ENCODE measurements at regions of chr2 and their contacts with region 1.

Region 1: DNA sequence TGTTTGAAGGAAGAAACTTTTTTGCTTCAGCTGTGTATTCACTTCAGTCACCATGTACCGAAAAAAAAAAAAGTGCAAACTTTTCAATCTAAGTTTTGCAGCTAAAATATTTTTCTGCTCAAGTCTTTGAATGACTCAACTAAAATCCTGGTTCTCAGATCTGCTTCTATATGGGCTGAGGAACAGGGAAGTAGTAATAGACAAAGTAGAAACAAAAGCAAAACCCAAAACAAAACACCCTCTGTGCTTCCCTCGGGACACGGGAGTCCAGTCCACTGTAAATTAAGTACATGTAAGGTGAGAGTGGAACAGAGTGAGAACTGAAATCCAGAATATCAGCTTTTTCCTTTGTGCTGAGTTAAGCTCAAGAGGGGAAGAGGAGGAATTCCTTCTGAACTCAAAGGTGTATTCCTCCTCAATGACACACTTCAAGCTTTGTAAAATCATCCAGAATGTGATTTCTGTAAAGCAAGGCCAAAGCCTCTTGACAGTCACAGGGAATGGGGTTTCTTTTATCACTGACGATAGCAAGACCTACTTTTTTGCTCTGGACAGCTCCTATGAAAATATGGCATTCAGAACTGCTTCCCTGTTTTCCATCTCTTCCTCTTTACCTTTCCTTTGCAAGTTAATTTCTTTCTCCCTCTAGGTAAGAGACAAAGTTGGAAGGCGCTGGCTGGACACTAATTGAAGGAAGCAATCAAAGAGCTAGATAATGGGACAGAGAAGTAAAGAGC is 433.5 kb upstream of the MMADHC start:
- DNase-seq: no peak
- CTCF ChIP-seq: no peak

Region 2: GRCh38 chr2:149743842-149744448 is 277.2 kb before region 1 on chr2:
- CTCF ChIA-PET with region 1: no interaction called
- POLR2A ChIA-PET with region 1: no interaction called
- DNase-seq: no peak
- CTCF ChIP-seq: no peak

Region 3: DNA sequence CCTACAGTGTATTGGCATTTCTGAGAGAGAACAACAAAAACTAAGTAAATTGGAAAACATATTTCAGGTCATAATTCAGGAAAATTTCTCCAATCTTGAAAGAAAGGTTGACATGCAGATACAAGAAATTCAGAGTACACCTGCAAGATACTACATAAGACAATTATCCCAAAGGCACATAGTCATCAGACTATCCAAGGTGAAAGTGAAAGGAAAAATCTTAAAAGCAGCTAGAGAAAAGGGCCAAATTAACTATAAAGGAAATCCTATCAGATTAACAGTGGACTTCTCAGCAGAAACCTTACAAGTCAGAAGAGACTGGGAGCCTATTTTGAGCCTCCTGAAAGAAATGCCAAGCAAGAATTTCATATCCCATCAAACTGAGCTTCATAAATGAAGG is 15.5 kb after region 1 on chr2:
- CTCF ChIA-PET with region 1: interaction called, 11 read pairs
- POLR2A ChIA-PET with region 1: no interaction called
- DNase-seq: no peak
- CTCF ChIP-seq: no peak

Region 4: DNA sequence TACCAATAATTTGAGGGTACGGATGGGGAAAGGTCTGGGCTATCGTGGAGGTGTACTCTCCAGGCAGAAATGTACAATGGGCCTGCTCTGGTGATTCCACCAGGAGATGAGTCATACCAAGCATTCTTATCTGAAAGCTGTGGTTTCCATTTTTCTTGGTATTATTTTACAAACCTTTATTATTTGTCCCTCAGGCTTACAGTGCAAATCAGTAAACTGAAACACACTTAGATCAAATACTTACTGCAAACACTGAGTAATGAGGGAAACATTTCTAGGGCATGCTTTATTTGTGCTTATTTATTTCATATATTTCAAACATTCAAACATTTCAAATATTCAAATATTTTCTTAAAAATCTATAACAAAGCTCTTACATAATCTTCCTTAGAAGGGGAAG is 146.6 kb after region 1 on chr2:
- CTCF ChIA-PET with region 1: no interaction called
- POLR2A ChIA-PET with region 1: no interaction called
- DNase-seq: peak; percentile 9
- CTCF ChIP-seq: no peak

Region 5: GRCh38 chr2:150718280-150718679 is 697.2 kb after region 1 on chr2:
- CTCF ChIA-PET with region 1: no interaction called
- POLR2A ChIA-PET with region 1: no interaction called
- DNase-seq: no peak
- CTCF ChIP-seq: no peak